Naive thymus-derived CD4-positive, alpha-beta T cell (primary cell): ENCODE measurements at regions of chr3 and their contacts with region 1.

Region 1: DNA sequence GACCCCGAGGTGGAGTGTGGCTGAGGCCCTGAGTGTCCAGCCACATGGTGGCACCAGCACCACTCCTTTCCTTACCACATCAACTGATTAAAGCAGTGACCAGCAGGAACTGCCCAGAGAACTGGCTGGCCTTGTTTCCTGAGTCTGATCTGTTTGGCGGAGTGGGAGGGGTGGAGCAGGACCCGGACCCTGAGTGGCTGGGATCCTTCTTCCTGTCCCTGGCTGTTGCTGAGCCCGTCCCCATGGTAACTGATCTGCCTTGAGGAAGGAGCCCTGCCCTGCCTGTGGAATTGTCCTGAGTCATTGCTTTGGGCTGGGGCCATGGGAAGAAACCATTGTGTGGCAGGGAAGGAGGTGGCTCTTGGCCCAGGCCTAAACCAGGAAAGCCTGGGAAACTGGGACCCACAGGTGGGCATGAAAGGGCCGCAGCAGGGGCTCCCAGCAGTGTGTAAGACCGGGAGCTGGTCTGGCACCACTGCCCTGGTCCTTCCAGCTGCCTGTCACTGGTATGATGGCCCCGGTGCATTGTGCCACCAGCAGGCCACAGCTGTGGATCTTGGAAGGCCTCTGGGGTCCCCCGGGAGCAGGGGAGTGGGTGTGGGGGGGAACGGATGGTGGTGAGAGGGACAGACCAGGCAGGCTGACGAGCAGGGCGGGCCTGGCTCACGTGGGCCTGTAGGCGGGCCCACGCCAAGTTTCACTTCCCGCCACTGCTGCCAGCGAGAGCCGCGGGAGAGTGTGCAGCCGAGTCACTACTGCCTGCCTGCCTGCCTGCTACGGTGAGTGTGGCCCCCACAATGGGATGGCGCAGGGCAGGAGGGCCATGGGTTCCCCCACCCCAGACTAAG is 19.2 kb downstream of the ATRIP start:
- DNase-seq: peak; percentile 64 to 84 (median 76)
- ATAC-seq: peak; percentile 91
- H3K4me3 ChIP-seq: peak overlapping the region; percentile 87
- H3K4me3 Mint-ChIP-seq: peak overlapping the region; percentile 87 to 98 (median 91)
- H3K27ac ChIP-seq: peak overlapping the region; percentile 95
- H3K27ac Mint-ChIP-seq: peak overlapping the region; percentile 89 to 99 (median 95)
- H3K4me1 ChIP-seq: peaks cover 41 to 53% of the 10 kb centered on the region in 2 donors
- H3K4me1 Mint-ChIP-seq: peaks cover 25 to 62% (median 57%) of the 10 kb centered on the region in 7 donors
- H3K27me3 ChIP-seq: no peaks in the 10 kb centered on the region
- H3K27me3 Mint-ChIP-seq: no peaks in the 10 kb centered on the region

Region 2: DNA sequence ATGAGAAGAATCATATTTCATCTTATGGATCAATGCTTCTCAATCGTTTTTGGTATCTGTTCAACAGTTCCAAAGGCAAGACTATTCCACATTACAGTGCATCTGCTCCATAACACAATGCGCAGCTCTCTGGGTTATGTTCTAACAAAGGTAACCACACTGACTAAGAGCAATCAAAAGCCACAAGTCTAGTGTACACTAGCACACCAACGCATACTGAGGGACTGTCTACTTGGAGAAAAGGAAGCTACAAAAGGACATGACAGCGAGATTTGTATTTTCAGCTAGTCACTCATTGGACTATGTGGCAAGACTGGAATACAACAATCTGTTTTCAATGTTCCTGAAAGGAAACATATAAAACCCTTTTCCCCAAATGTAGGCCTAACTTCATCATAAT is 1337.6 kb before region 1 on chr3:
- CTCF ChIA-PET with region 1: no interaction called
- POLR2A ChIA-PET with region 1: no interaction called
- intact Hi-C with region 1: no loop called
- DNase-seq: no peak
- ATAC-seq: no peak
- H3K4me3 ChIP-seq: no peak overlapping the region
- H3K4me3 Mint-ChIP-seq: peak overlapping the region in 2 of 10 donors; percentile 6 to 19
- H3K27ac ChIP-seq: no peak overlapping the region
- H3K27ac Mint-ChIP-seq: peak overlapping the region in 4 of 9 donors; percentile 6 to 69 (median 21)
- H3K4me1 ChIP-seq: peaks cover 0 to 17% of the 10 kb centered on the region in 2 donors
- H3K4me1 Mint-ChIP-seq: peaks cover 21 to 64% (median 50%) of the 10 kb centered on the region in 7 donors
- H3K27me3 ChIP-seq: no peaks in the 10 kb centered on the region
- H3K27me3 Mint-ChIP-seq: no peaks in the 10 kb centered on the region

Region 3: GRCh38 chr3:48294611-48295263 is 171.0 kb before region 1 on chr3:
- CTCF ChIA-PET with region 1: no interaction called
- POLR2A ChIA-PET with region 1: no interaction called
- intact Hi-C with region 1: no loop called
- DNase-seq: no peak
- ATAC-seq: no peak
- H3K4me3 ChIP-seq: no peak overlapping the region
- H3K4me3 Mint-ChIP-seq: no peak overlapping the region
- H3K27ac ChIP-seq: no peak overlapping the region
- H3K27ac Mint-ChIP-seq: no peak overlapping the region
- H3K4me1 ChIP-seq: peaks cover 2% of the 10 kb centered on the region in 2 donors
- H3K4me1 Mint-ChIP-seq: peaks cover 8 to 25% (median 19%) of the 10 kb centered on the region in 7 donors
- H3K27me3 ChIP-seq: no peaks in the 10 kb centered on the region
- H3K27me3 Mint-ChIP-seq: no peaks in the 10 kb centered on the region

Region 4: GRCh38 chr3:48446425-48447193 is 19.1 kb before region 1 on chr3 and contains the start of gene ATRIP:
- CTCF ChIA-PET with region 1: interaction called, 4 read pairs
- POLR2A ChIA-PET with region 1: interaction called, 13 read pairs
- intact Hi-C with region 1: loop called in 1 of 2 experiments (anchors 1 kb)
- DNase-seq: peak; percentile 73 to 93 (median 81)
- ATAC-seq: peak; percentile 99
- H3K4me3 ChIP-seq: peak within 1 kb of the TSS; percentile 90
- H3K4me3 Mint-ChIP-seq: peak within 1 kb of the TSS; percentile 80 to 95 (median 88)
- H3K27ac ChIP-seq: peak within 1 kb of the TSS; percentile 81
- H3K27ac Mint-ChIP-seq: peak within 1 kb of the TSS; percentile 84 to 97 (median 92)
- H3K4me1 ChIP-seq: peaks cover 20 to 22% of the 10 kb centered on the region in 2 donors
- H3K4me1 Mint-ChIP-seq: peaks cover 17 to 53% (median 45%) of the 10 kb centered on the region in 7 donors
- H3K27me3 ChIP-seq: no peaks in the 10 kb centered on the region
- H3K27me3 Mint-ChIP-seq: no peaks in the 10 kb centered on the region
- total RNA-seq, gene ATRIP: 7.9 to 14.2 (median 12.5) TPM

Region 5: GRCh38 chr3:48478596-48479555 is 13.1 kb after region 1 on chr3:
- CTCF ChIA-PET with region 1: interaction called, 9 read pairs
- POLR2A ChIA-PET with region 1: interaction called, 29 read pairs
- intact Hi-C with region 1: loop called (anchors 1 kb)
- DNase-seq: peak; percentile 34 to 88 (median 84)
- ATAC-seq: peak; percentile 88
- H3K4me3 ChIP-seq: peak overlapping the region; percentile 50
- H3K4me3 Mint-ChIP-seq: peak overlapping the region; percentile 72 to 100 (median 84)
- H3K27ac ChIP-seq: peak overlapping the region; percentile 57
- H3K27ac Mint-ChIP-seq: peak overlapping the region; percentile 86 to 99 (median 98)
- H3K4me1 ChIP-seq: peaks cover 25 to 33% of the 10 kb centered on the region in 2 donors
- H3K4me1 Mint-ChIP-seq: peaks cover 27 to 55% (median 46%) of the 10 kb centered on the region in 7 donors
- H3K27me3 ChIP-seq: no peaks in the 10 kb centered on the region
- H3K27me3 Mint-ChIP-seq: no peaks in the 10 kb centered on the region

Region 6: GRCh38 chr3:48514436-48515227 is 48.9 kb after region 1 on chr3:
- CTCF ChIA-PET with region 1: interaction called, 6 read pairs
- POLR2A ChIA-PET with region 1: interaction called, 11 read pairs
- intact Hi-C with region 1: no loop called
- DNase-seq: peak in 6 of 9 donors; percentile 48 to 67 (median 54)
- ATAC-seq: peak; percentile 66
- H3K4me3 ChIP-seq: peak overlapping the region; percentile 25
- H3K4me3 Mint-ChIP-seq: peak overlapping the region; percentile 62 to 82 (median 72)
- H3K27ac ChIP-seq: no peak overlapping the region
- H3K27ac Mint-ChIP-seq: peak overlapping the region; percentile 55 to 91 (median 78)
- H3K4me1 ChIP-seq: peaks cover 35 to 61% of the 10 kb centered on the region in 2 donors
- H3K4me1 Mint-ChIP-seq: peaks cover 48 to 85% (median 75%) of the 10 kb centered on the region in 7 donors
- H3K27me3 ChIP-seq: no peaks in the 10 kb centered on the region
- H3K27me3 Mint-ChIP-seq: no peaks in the 10 kb centered on the region

Region 7: GRCh38 chr3:48548729-48549705 is 83.3 kb after region 1 on chr3:
- CTCF ChIA-PET with region 1: interaction called, 5 read pairs
- POLR2A ChIA-PET with region 1: interaction called, 3 read pairs
- intact Hi-C with region 1: loop called (anchors 1 to 5 kb)
- DNase-seq: peak; percentile 66 to 86 (median 78)
- ATAC-seq: peak; percentile 97
- H3K4me3 ChIP-seq: no peak overlapping the region
- H3K4me3 Mint-ChIP-seq: no peak overlapping the region
- H3K27ac ChIP-seq: no peak overlapping the region
- H3K27ac Mint-ChIP-seq: peak overlapping the region in 2 of 9 donors; percentile 9 to 48
- H3K4me1 ChIP-seq: no peaks in the 10 kb centered on the region
- H3K4me1 Mint-ChIP-seq: peaks cover 6 to 38% (median 20%) of the 10 kb centered on the region in 7 donors
- H3K27me3 ChIP-seq: no peaks in the 10 kb centered on the region
- H3K27me3 Mint-ChIP-seq: no peaks in the 10 kb centered on the region

Region 8: DNA sequence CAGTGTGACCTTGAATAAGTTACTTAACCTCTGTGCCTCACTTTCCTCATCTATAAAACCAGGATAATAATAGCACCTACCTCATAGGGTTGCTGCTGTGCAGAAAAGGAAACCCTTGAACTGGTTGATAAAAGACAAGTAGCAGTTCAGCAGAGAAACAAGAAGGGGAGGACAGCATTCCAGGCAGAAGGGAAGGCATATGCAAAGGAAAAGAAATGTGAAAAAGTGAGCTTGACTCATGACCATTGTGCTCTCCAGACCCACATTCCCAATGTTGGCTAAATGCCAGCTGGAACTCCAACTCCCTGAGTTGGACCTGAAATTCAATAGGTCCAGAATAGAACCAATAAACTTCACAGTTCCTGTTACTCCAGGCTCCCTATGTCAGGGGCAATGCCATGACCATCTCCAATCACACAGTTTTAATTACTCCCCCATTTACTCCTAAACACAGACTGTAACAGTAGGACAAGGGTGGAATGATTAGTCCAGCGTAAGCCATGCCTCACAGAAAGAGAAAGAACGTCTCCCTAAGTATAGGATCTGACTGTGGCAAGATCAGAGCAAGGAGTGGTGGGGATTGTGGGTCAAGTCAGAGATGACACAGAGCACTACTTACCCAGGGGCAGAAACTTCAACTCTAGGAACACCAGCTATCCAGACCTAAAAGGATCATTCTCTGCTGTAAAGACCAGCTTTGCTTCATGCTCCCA is 355.0 kb after region 1 on chr3:
- CTCF ChIA-PET with region 1: no interaction called
- POLR2A ChIA-PET with region 1: no interaction called
- intact Hi-C with region 1: no loop called
- DNase-seq: no peak
- ATAC-seq: no peak
- H3K4me3 ChIP-seq: no peak overlapping the region
- H3K4me3 Mint-ChIP-seq: peak overlapping the region in 1 of 10 donors; percentile 10
- H3K27ac ChIP-seq: no peak overlapping the region
- H3K27ac Mint-ChIP-seq: peak overlapping the region in 7 of 9 donors; percentile 3 to 69 (median 49)
- H3K4me1 ChIP-seq: no peaks in the 10 kb centered on the region
- H3K4me1 Mint-ChIP-seq: peaks cover 10 to 61% (median 51%) of the 10 kb centered on the region in 7 donors
- H3K27me3 ChIP-seq: no peaks in the 10 kb centered on the region
- H3K27me3 Mint-ChIP-seq: no peaks in the 10 kb centered on the region